ENCODE measurements at regions of chr15 and their contacts with region 1.

Region 1: GRCh38 chr15:66287461-66288057 is 5.8 kb upstream of the DIS3L start:
- DNase-seq: no peak
- ATAC-seq: no peak
- H3K4me3 Mint-ChIP-seq: no peak overlapping the region
- H3K27ac Mint-ChIP-seq: no peak overlapping the region
- H3K4me1 Mint-ChIP-seq: peaks cover 21% of the 10 kb centered on the region
- H3K27me3 Mint-ChIP-seq: no peaks in the 10 kb centered on the region

Region 2: DNA sequence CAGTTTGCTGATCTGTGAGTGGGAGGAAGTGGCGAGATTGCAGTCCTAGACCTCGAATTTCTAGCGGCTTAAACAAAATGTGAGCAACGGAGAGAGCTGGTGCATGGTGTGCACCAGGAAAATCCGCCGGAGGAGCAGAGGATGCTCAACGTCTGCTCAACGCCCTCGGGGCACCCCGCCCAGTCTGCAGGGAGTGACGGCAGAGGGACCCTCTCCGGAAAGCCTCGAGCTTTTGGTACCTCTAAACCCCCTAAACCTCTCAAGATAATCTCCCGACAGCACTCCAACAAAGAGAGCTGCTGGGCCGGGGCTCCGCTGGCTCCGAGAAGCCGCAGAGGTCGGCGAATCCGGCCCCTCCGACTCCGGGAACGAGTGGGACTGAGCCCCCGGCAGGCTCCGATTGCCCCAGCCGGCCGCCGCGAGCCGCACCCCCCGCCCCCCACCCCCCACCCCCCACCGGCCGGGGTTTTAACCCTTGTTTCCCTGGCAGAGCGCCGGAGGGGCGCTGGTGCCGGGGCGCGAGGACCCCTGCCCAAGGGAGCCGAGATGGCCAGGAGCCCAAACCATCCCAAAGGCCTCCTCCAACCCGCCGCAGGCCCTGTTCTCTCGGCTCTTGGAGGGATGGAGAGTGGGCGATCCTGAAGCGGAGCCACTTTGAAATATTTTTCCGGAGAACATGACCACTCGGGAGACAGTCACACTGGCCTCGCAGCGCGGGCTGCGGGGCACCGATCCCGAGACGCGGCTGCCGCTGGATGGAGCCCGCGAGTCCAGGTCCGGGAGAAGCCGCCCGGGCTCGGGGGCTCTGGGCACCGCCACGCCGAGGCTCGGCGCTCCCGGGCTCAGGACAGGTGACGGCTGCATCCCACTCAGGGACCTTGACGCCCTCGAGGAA is 35.5 kb before region 1 on chr15:
- CTCF ChIA-PET with region 1: interaction called, 16 read pairs
- DNase-seq: peak; percentile 50
- ATAC-seq: peak; percentile 64
- H3K4me3 Mint-ChIP-seq: peak overlapping the region; percentile 50
- H3K27ac Mint-ChIP-seq: no peak overlapping the region
- H3K4me1 Mint-ChIP-seq: peaks cover 19% of the 10 kb centered on the region
- H3K27me3 Mint-ChIP-seq: peaks cover 80% of the 10 kb centered on the region